Right cardiac atrium (tissue), 5 donors: ENCODE measurements at regions of chrX and their contacts with region 1.

Region 1: DNA sequence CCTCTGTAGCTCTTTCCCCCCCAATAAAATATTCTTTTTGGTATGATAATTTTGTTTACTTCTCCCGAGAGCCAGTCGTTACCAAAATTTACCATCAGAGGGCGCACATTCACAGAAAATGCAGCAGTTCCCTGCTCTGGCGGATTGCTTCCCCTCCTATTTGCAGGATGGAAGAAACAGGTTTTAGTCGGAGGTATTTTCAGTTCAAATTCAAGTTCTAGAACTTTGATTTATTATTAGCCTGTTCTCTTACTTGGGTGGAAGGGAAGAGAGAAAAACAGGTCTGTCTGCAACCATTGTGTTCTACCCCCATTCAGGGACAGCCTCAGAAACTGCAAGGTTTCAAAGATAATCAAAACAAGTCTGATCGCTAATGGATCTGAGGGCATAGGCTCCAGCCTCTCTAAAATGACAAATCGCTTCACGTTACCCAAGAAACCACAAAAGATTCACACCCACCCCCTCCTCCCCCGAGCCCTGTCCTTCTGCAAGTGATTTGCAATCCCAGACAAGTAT is 263.8 kb upstream of the RPS6KA3 start:
- DNase-seq: peak in 2 of 3 donors; percentile 15 to 61
- ATAC-seq: peak in 1 of 2 donors; percentile 42
- H3K4me3 ChIP-seq: peak overlapping the region; percentile 20
- H3K27ac ChIP-seq: no peak overlapping the region
- H3K4me1 ChIP-seq: peaks cover 1% of the 10 kb centered on the region
- H3K27me3 ChIP-seq: no peaks in the 10 kb centered on the region

Region 2: GRCh38 chrX:20067709-20068561 is 462.5 kb before region 1 on chrX:
- intact Hi-C with region 1: no loop called
- DNase-seq: peak; percentile 76 to 89 (median 87)
- ATAC-seq: peak; percentile 92
- H3K4me3 ChIP-seq: no peak overlapping the region
- H3K27ac ChIP-seq: peak overlapping the region; percentile 37
- H3K4me1 ChIP-seq: no peaks in the 10 kb centered on the region
- H3K27me3 ChIP-seq: no peaks in the 10 kb centered on the region

Region 3: DNA sequence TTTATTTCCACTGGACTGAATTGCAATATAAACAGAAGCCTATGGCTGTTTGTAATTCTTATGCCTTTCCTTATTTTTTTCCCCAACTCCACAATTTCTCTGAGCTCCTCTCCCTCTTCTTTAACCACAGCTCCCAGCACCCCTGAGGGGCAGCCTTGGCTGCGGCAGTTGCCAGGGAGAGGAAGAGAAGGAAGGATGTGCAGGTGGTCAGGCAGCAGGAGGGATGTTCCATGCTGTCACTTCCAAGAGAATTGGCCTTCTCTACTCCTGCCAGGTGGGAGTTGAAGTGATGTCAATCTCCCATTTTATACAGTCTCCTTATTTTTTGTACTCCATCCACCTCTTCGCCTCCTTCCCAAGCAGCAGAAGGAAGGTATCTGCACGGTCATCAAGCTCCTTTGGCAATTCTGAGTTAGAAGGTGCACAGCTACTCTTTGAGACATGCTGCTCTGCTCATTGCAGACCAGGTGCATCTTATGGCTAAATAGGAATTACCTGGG is 79.5 kb after region 1 on chrX:
- intact Hi-C with region 1: loop called in 1 of 4 experiments (anchors 10 kb)
- DNase-seq: no peak
- ATAC-seq: no peak
- H3K4me3 ChIP-seq: no peak overlapping the region
- H3K27ac ChIP-seq: no peak overlapping the region
- H3K4me1 ChIP-seq: no peaks in the 10 kb centered on the region
- H3K27me3 ChIP-seq: no peaks in the 10 kb centered on the region

Region 4: GRCh38 chrX:21479695-21480270 is 949.3 kb after region 1 on chrX:
- intact Hi-C with region 1: loop called in 2 of 4 experiments (anchors 10 kb)
- DNase-seq: no peak
- ATAC-seq: peak in 1 of 2 donors; percentile 47
- H3K4me3 ChIP-seq: no peak overlapping the region
- H3K27ac ChIP-seq: no peak overlapping the region
- H3K4me1 ChIP-seq: no peaks in the 10 kb centered on the region
- H3K27me3 ChIP-seq: no peaks in the 10 kb centered on the region

Region 5: DNA sequence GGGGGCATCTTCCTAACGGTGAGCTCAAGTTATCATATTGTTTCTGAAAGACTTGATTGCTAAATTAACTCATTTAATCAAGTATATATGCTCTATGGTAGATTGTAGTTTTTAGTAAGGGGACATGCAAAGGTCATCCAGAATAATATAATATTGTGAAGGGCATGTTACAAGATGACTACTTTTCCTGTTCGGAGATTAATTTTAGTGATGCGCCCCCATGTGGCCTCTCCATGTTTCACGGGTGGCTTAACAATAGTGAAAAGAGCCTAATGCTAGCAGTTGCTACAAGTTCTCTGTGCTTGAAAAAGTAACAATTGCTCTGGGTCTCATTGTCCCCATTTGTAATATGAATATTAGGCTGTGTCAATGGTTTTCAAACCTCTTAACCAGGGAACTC is 1215.3 kb after region 1 on chrX:
- intact Hi-C with region 1: loop called in 1 of 4 experiments (anchors 10 kb)
- DNase-seq: peak in 2 of 3 donors; percentile 45 to 64
- ATAC-seq: no peak
- H3K4me3 ChIP-seq: no peak overlapping the region
- H3K27ac ChIP-seq: no peak overlapping the region
- H3K4me1 ChIP-seq: no peaks in the 10 kb centered on the region
- H3K27me3 ChIP-seq: no peaks in the 10 kb centered on the region